GM13976 (cell line): ENCODE measurements at regions of chr6 and their contacts with region 1.

Region 1: GRCh38 chr6:79233611-79234149 is 802 bp downstream of the HMGN3 start:
- DNase-seq: peak; percentile 87
- CTCF ChIP-seq: peak; percentile 9

Region 2: GRCh38 chr6:78867370-78868040 is 366.2 kb before region 1 on chr6 and contains the start of gene IRAK1BP1:
- in situ Hi-C with region 1: loop called (anchors 25 kb)
- DNase-seq: peak; percentile 93
- CTCF ChIP-seq: no peak